Colonic mucosa (tissue), 4 donors: ENCODE measurements at regions of chr12 and their contacts with region 1.

Region 1: GRCh38 chr12:99049774-99050173 is 404.7 kb downstream of the APAF1 start:
- DNase-seq: no peak
- H3K4me3 ChIP-seq: no peak overlapping the region
- H3K27ac ChIP-seq: no peak overlapping the region
- H3K4me1 ChIP-seq: no peaks in the 10 kb centered on the region
- H3K27me3 ChIP-seq: no peaks in the 10 kb centered on the region
- CTCF ChIP-seq: no peak

Region 2: DNA sequence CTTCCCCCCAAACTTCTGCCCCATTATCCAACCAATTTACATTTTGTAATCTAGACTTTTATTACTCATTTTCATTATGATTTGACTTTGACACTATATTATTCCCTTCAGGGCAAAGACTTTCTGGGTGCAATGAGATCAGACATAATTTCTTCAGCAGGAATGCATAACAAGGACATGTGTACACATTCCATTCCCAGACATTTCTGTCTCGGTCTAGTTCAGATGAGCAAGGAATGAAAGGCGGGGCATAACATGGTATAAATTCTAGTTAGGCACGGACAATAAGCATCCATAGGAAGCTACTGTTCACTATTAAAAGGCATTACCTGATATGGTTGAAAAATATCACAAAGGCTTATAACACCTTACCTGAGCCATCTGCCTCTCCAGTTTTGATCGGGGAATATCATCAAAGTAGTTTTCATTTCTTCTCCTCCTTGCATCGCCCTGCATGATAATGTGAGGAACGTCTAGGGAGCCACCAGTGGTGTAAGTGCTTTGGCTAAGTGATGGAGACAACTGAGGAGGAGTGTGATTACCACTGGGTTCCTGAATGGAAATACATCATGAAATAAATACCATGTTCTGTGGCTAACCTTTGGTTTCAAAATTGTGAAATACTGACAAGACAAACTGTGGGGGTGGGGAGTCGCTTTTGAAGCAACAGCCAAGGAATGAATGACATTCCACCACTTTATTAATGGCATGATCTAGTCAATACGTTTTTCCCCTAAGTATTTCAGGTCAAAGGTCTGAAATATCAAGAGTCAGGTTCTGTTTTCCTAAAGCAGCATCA is 220.8 kb before region 1 on chr12:
- intact Hi-C with region 1: no loop called
- DNase-seq: no peak
- H3K4me3 ChIP-seq: no peak overlapping the region
- H3K27ac ChIP-seq: no peak overlapping the region
- H3K4me1 ChIP-seq: no peaks in the 10 kb centered on the region
- H3K27me3 ChIP-seq: no peaks in the 10 kb centered on the region
- CTCF ChIP-seq: no peak

Region 3: DNA sequence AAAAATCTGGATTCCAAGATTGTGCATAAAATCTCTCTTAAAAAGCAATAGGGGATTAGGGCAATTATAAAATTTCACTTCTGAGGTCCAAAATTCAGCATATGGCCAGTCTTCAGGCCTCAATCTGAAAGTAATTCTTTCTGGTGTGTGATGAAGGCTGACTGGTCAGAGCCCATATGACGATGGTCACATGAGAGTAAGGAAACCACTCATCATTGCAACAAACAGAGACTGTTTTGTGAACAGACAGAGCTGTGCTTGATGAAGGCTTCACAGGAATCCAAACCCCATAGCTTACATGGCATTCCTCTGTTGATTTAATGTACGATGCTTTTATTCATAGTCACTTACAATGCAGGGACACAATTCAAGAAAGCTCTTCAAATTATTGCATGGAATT is 166.5 kb before region 1 on chr12:
- intact Hi-C with region 1: no loop called
- DNase-seq: no peak
- H3K4me3 ChIP-seq: no peak overlapping the region
- H3K27ac ChIP-seq: no peak overlapping the region
- H3K4me1 ChIP-seq: no peaks in the 10 kb centered on the region
- H3K27me3 ChIP-seq: no peaks in the 10 kb centered on the region
- CTCF ChIP-seq: no peak

Region 4: DNA sequence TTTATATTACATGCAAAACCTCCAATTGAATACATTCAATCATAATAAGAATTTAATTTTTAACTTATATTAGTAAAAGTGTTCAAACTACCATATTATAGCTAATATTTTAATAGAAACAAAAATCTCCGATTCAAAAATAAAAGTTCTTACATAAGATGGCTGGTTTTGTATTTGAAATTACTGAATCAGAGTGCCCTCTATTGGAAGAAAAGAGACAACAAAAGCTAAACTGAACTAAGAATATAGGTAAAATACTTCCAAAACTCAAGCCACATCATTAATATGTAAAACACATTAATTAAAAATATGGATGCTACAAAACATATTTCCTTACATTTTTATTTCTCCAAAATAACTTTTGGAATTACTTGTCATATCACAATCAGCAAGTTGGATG is 718.0 kb after region 1 on chr12:
- intact Hi-C with region 1: loop called (anchors 5 kb)
- DNase-seq: no peak
- H3K4me3 ChIP-seq: no peak overlapping the region
- H3K27ac ChIP-seq: no peak overlapping the region
- H3K4me1 ChIP-seq: no peaks in the 10 kb centered on the region
- H3K27me3 ChIP-seq: no peaks in the 10 kb centered on the region
- CTCF ChIP-seq: no peak